Activated CD4-positive, alpha-beta memory T cell treated with anti-CD3 and anti-CD28 coated beads, Interleukin-2, amount 10 ng/mL, durations not matched to agents 7 days and 5 days (primary cell): ENCODE measurements at regions of chr10 and their contacts with region 1.

Region 1: GRCh38 chr10:123154092-123154921 is at the start of gene BUB3:
- DNase-seq: peak; percentile 98
- H3K4me3 Mint-ChIP-seq: peak within 1 kb of the TSS; percentile 99
- H3K27ac Mint-ChIP-seq: peak within 1 kb of the TSS; percentile 100
- H3K4me1 Mint-ChIP-seq: peaks cover 65% of the 10 kb centered on the region
- H3K27me3 Mint-ChIP-seq: peaks cover 24% of the 10 kb centered on the region
- total RNA-seq, gene BUB3: 266 to 275 TPM

Region 2: GRCh38 chr10:122990278-122990677 is 164.0 kb before region 1 on chr10:
- CTCF ChIA-PET with region 1: no interaction called
- POLR2A ChIA-PET with region 1: no interaction called
- DNase-seq: no peak
- H3K4me3 Mint-ChIP-seq: no peak overlapping the region
- H3K27ac Mint-ChIP-seq: no peak overlapping the region
- H3K4me1 Mint-ChIP-seq: no peaks in the 10 kb centered on the region
- H3K27me3 Mint-ChIP-seq: no peaks in the 10 kb centered on the region

Region 3: GRCh38 chr10:123008439-123009205 is 145.7 kb before region 1 on chr10 and contains the starts of genes ACADSB and IKZF5:
- CTCF ChIA-PET with region 1: interaction called, 3 read pairs
- POLR2A ChIA-PET with region 1: interaction called, 15 read pairs
- DNase-seq: peak; percentile 97
- H3K4me3 Mint-ChIP-seq: peak within 1 kb of the TSS; percentile 93
- H3K27ac Mint-ChIP-seq: peak within 1 kb of the TSS; percentile 91
- H3K4me1 Mint-ChIP-seq: peaks cover 41% of the 10 kb centered on the region
- H3K27me3 Mint-ChIP-seq: no peaks in the 10 kb centered on the region
- total RNA-seq, gene ACADSB: 21.2 to 21.7 TPM
- total RNA-seq, gene IKZF5: 16.6 to 18.5 TPM

Region 4: DNA sequence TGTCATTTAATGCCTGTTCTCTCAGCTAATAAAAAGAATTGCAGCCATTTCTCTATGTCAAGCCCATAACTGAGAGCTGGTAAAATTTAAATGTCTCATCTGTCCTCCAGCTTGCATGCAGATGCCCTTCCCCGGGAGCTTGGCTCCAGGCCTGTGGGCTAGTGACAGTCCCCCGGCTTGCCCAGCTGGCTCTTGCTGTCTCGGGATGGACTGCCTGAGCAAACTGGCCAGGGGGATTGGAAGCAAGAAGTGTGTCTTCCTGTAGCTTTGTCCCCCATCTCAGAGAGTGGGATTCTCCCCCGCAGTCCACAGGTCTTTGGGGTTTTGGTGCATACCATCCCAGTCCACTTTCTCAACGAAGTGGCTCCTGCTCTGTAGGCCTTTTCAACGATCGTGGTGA is 72.4 kb before region 1 on chr10:
- CTCF ChIA-PET with region 1: no interaction called
- POLR2A ChIA-PET with region 1: no interaction called
- DNase-seq: no peak
- H3K4me3 Mint-ChIP-seq: no peak overlapping the region
- H3K27ac Mint-ChIP-seq: no peak overlapping the region
- H3K4me1 Mint-ChIP-seq: no peaks in the 10 kb centered on the region
- H3K27me3 Mint-ChIP-seq: peaks cover 10% of the 10 kb centered on the region

Region 5: DNA sequence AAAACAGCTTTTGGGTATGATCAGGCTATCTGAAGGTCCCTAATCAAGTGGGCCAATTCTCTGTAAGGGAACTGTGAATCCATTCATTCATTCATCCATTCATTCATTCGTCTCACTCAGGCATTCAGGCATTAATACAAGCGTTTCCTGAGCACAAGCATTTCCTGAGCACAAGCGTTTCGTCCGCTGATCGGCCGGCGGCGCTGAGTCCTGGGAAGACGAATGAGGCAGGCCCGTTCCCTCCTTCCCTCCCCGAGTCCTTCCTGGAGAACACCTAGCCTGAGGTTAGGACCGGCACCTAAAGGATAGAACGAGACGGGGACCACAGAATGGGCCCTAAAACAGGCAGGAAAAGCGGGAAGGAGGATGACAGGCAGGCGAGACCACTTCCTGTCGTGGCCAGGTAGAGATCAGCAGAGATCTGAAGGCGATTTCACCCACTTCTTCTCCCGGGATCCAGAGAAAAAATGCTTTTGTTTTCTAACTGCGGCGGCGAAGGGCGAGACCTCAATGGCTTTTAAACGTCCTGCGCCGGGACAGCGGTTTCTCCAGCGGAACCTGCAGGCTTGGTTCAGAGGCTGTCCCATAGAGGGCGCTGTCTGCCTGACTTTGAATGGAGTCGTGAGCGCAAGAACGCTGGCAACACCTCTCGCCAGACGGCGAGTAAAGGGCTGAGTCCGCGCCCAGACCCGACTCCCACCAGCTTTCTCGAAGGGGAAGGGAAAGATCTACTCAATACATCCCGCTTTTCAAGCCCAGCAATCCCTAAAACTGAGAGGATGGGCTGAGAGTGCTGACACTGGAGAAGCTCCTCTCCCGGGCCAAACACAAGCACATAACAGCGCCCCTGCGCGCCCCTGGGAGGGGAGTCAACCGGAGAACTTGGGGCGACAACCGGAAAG is 21.5 kb before region 1 on chr10:
- CTCF ChIA-PET with region 1: interaction called, 13 read pairs
- POLR2A ChIA-PET with region 1: interaction called, 3 read pairs
- DNase-seq: peak; percentile 87
- H3K4me3 Mint-ChIP-seq: peak overlapping the region; percentile 46
- H3K27ac Mint-ChIP-seq: peak overlapping the region; percentile 45
- H3K4me1 Mint-ChIP-seq: peaks cover 27% of the 10 kb centered on the region
- H3K27me3 Mint-ChIP-seq: peaks cover 77% of the 10 kb centered on the region

Region 6: DNA sequence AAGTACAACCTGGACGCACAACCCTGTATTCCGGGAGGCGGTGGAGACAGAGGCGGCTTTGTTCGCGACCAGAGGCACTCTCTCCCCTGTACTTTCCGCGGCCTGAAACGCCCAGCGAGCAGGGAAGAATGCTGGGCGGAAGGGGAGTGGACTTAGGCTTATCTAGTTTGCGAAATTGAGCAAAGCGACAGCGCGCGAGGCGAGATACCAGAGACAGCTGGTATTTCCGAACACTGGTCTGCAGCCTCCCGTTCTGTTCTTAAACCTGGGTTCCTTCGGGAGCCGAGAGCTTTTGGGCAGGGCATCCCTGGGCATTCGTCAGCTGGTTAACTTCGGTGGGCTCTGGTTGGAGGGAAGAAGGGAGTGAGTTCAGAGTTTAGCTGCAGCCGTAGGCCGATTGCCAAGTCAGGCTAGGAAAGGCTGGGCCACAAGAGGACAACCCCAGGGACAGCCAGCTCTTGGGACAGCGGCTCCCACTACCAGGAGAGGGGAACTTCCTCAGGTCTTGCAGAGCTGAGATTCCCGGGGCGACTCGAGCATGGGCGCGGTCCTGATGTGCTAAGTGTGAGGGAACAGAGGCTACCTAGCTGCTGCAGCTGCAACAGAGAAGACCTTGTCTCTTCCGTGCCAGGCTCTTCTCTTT is 14.7 kb before region 1 on chr10:
- CTCF ChIA-PET with region 1: interaction called, 21 read pairs
- POLR2A ChIA-PET with region 1: interaction called, 27 read pairs
- DNase-seq: no peak
- H3K4me3 Mint-ChIP-seq: no peak overlapping the region
- H3K27ac Mint-ChIP-seq: no peak overlapping the region
- H3K4me1 Mint-ChIP-seq: peaks cover 32% of the 10 kb centered on the region
- H3K27me3 Mint-ChIP-seq: peaks cover 82% of the 10 kb centered on the region

Region 7: DNA sequence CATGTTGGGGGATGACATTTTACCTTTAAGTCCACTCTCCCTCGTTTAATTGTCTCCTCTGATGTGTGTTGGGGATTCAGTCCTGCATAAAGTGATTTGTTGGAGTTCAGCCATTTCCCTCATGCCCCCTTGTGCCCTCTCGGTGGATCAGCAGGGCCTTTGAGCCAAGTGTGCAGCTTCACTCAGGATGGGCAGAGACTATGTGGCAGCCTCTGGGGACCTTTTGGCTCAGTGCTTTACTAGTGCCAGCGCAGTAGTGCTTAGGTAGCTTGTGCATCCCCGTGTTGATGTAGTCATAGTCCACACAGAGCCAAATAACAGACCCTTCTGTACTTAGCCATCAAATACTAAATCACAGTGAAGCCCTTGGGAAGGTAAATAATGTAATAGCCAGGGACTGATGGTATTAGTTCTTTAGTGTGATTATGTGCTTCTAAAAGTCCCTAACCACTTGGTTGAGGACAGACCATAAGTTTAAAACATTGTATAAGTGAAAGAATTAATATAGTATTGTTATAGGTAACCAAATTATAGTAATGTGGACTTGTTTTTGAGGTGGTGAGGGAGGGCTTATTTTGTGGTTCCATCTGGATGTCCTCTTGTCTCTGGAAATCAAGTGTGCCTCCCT is 11.3 kb after region 1 on chr10:
- CTCF ChIA-PET with region 1: interaction called, 4 read pairs
- POLR2A ChIA-PET with region 1: interaction called, 14 read pairs
- DNase-seq: no peak
- H3K4me3 Mint-ChIP-seq: no peak overlapping the region
- H3K27ac Mint-ChIP-seq: no peak overlapping the region
- H3K4me1 Mint-ChIP-seq: peaks cover 37% of the 10 kb centered on the region
- H3K27me3 Mint-ChIP-seq: no peaks in the 10 kb centered on the region

Region 8: GRCh38 chr10:123229927-123230632 is 75.8 kb after region 1 on chr10:
- CTCF ChIA-PET with region 1: no interaction called
- POLR2A ChIA-PET with region 1: no interaction called
- DNase-seq: no peak
- H3K4me3 Mint-ChIP-seq: no peak overlapping the region
- H3K27ac Mint-ChIP-seq: no peak overlapping the region
- H3K4me1 Mint-ChIP-seq: no peaks in the 10 kb centered on the region
- H3K27me3 Mint-ChIP-seq: no peaks in the 10 kb centered on the region

Region 9: DNA sequence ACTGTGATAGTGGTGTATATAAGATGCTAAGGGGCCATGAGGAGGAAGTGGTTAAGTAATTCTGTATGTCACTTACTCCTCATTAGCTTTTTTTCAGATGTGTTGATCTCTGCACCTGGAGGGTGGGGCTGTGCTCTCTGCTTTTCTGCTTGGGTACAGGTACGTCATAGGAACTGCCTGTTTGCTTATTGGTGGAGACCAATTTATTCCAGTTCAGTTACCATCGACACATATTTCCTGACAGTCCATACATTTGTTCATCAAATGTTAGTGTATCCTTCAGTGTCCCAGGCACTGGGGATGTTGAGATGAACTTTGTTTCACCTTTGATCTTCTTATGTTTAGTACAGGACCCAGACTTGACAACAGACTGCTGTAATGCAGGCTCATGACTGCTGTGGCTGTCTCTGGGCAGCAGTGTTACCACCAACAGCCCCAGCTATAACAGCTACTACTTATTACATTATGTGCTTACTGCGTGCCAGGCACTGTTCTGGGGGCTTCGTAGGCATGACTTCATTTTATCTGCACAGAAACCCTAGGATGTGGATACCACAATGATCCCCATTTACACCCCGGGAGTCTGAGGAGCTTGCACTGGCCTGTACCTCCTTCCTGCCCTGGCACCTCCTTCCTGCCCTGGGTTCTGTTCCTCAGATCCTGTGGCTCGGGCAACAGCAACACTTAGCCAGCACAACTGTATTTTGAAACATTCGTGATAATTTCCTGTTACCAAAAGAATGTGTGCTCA is 87.3 kb after region 1 on chr10:
- CTCF ChIA-PET with region 1: no interaction called
- POLR2A ChIA-PET with region 1: interaction called, 15 read pairs
- DNase-seq: peak; percentile 49
- H3K4me3 Mint-ChIP-seq: no peak overlapping the region
- H3K27ac Mint-ChIP-seq: peak overlapping the region; percentile 93
- H3K4me1 Mint-ChIP-seq: peaks cover 26% of the 10 kb centered on the region
- H3K27me3 Mint-ChIP-seq: no peaks in the 10 kb centered on the region